ENCODE measurements at regions of chr19 and their contacts with region 1.

Region 1: GRCh38 chr19:19105365-19106055 is 32.8 kb downstream of the TMEM161A start:
- DNase-seq: peak; percentile 86 to 89
- H3K4me3 ChIP-seq: peak overlapping the region in 1 of 3 donors; percentile 26
- H3K27ac ChIP-seq: peak overlapping the region; percentile 97 to 99 (median 97)
- H3K4me1 ChIP-seq: peaks cover 36 to 56% of the 10 kb centered on the region in 2 donors
- H3K27me3 ChIP-seq: no peaks in the 10 kb centered on the region
- CTCF ChIP-seq: no peak
- POLR2A ChIP-seq: peak in 1 of 2 donors; percentile 86

Region 2: GRCh38 chr19:18883526-18884304 is 221.8 kb before region 1 on chr19:
- intact Hi-C with region 1: no loop called
- DNase-seq: no peak
- H3K4me3 ChIP-seq: no peak overlapping the region
- H3K27ac ChIP-seq: no peak overlapping the region
- H3K4me1 ChIP-seq: no peaks in the 10 kb centered on the region
- H3K27me3 ChIP-seq: no peaks in the 10 kb centered on the region
- CTCF ChIP-seq: no peak
- POLR2A ChIP-seq: no peak

Region 3: DNA sequence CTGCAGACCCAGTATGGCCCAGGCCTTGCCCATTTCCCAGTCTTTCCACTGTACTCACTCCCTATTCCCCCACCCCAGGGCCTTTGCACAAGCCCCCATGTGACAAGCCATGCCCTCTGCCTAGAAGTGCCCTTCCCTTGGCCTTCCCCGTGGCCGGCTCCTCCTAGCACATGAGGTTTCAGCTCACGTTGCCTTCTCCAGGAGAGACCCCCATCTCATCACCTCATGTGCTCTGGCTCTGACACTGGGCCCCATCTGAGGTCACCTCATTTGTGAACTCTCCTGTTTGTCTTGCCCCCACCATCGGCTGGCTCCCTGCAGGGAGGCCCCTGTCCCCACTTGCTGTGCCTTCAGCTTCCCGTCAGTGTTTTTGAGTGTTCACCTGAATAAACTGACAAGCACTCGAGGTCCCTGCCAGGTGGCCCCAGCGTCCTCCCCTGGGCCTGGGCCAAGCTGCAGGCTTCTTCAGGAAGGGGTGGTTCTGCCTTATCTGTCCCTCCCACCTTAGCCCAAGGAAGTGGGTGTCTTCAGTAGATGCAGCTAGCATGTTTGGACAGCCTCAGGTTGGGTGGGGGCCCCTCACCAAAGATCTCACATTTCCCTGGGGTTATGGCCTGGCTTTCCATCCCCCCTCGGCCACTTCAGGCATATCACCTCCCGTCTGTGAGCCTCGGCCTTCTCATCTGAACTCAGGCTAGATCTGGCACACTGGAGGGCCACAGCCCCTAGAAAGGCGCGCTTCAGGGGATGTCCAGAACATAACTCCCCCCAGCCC is 45.5 kb before region 1 on chr19:
- intact Hi-C with region 1: loop called (anchors 5 kb)
- DNase-seq: peak; percentile 88 to 89
- H3K4me3 ChIP-seq: no peak overlapping the region
- H3K27ac ChIP-seq: peak overlapping the region; percentile 50 to 92 (median 77)
- H3K4me1 ChIP-seq: peaks cover 39 to 54% of the 10 kb centered on the region in 2 donors
- H3K27me3 ChIP-seq: no peaks in the 10 kb centered on the region
- CTCF ChIP-seq: peak in 1 of 6 experiments; percentile 4
- POLR2A ChIP-seq: no peak